ENCODE measurements at regions of chr12 and their contacts with region 1.

Region 1: GRCh38 chr12:25020621-25021243 is 71.8 kb upstream of the BCAT1 start:
- DNase-seq: peak; percentile 96
- H3K4me3 ChIP-seq: peak overlapping the region; percentile 47
- H3K27ac ChIP-seq: peak overlapping the region; percentile 98
- H3K4me1 ChIP-seq: peaks cover 94% of the 10 kb centered on the region
- CTCF ChIP-seq: no peak

Region 2: DNA sequence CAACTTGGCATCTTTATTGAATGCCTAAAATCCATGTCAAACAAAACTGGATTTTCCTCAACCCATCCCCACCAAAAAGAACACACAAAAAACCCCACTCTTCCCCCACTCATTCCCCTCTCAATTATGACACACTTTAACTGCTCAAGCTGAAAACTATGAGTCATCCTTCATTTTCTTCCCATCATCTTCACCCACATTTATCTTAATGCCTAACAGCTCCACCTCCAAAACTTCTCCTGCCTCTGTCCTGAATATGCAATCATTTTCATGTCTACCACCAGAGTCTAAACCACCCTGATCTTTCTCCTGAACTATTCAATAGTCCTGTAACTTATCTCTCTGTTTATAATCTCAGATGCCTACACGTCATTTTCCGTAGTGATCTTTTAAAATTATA is 311.5 kb before region 1 on chr12:
- CTCF ChIA-PET with region 1: no interaction called
- POLR2A ChIA-PET with region 1: no interaction called
- intact Hi-C with region 1: no loop called
- DNase-seq: no peak
- H3K4me3 ChIP-seq: no peak overlapping the region
- H3K27ac ChIP-seq: no peak overlapping the region
- H3K4me1 ChIP-seq: peaks cover 28% of the 10 kb centered on the region
- CTCF ChIP-seq: no peak

Region 3: DNA sequence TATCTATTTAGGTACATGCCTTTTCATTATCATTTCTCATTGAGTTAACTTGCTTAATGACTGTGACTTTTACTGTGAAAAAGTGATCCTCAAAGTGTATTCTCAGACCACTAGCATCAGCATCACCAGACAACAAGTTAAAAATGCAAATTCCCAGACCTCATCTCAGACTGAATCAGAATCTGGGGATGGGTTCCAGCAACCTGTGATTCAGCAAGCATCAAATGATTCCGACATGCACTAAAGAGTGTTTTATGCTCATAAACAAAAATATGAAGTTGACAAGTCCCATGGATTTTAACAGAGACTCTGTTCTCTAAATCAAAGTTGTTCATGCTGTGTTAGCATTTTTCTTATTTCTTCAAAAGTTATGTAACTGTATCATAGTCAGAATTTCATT is 202.4 kb before region 1 on chr12:
- CTCF ChIA-PET with region 1: no interaction called
- POLR2A ChIA-PET with region 1: no interaction called
- intact Hi-C with region 1: no loop called
- DNase-seq: no peak
- H3K4me3 ChIP-seq: no peak overlapping the region
- H3K27ac ChIP-seq: no peak overlapping the region
- H3K4me1 ChIP-seq: peaks cover 22% of the 10 kb centered on the region
- CTCF ChIP-seq: no peak

Region 4: GRCh38 chr12:24948757-24949722 is 71.7 kb before region 1 on chr12 and contains the start of gene BCAT1:
- CTCF ChIA-PET with region 1: no interaction called
- POLR2A ChIA-PET with region 1: interaction called, 13 read pairs
- intact Hi-C with region 1: no loop called
- DNase-seq: peak; percentile 93
- H3K4me3 ChIP-seq: peak within 1 kb of the TSS; percentile 79
- H3K27ac ChIP-seq: peak within 1 kb of the TSS; percentile 70
- H3K4me1 ChIP-seq: peaks cover 59% of the 10 kb centered on the region
- CTCF ChIP-seq: peak; percentile 49; the same call in 1 of the 2 replicates
- total RNA-seq, gene BCAT1: 116 and 121 TPM in 2 replicates

Region 5: GRCh38 chr12:24960222-24960855 is 60.4 kb before region 1 on chr12:
- CTCF ChIA-PET with region 1: no interaction called
- POLR2A ChIA-PET with region 1: no interaction called
- intact Hi-C with region 1: no loop called
- DNase-seq: peak; percentile 72
- H3K4me3 ChIP-seq: no peak overlapping the region
- H3K27ac ChIP-seq: no peak overlapping the region
- H3K4me1 ChIP-seq: no peaks in the 10 kb centered on the region
- CTCF ChIP-seq: peak; percentile 91

Region 6: DNA sequence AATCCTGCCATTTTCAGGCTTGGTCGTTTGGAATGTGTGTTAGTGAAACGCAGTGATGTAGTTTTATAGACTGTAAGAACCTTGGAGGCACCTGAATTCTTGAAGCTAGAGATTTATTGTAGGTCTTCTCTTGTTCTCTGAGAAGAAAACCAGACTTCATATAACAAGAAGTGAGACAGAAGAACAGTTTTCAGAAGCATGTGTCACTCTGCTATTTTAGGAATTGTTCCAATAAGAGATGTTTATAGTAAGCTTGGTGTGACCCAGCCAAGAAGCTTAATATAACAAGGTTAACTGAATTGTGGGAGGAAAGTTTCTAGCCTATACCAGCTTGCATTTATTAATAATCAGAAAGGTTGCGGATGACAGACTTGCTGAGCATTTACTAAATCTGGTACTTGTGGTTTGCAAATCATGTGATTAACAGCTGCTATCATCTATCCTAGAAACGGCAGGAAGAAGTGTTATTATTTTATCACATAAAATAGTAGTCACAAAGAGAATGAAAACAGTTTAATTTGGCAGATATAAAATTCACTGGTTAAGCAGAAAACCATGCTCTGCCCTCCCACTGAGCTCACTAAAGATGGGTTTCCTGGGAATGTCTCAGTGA is 22.7 kb before region 1 on chr12:
- CTCF ChIA-PET with region 1: interaction called, 12 read pairs
- POLR2A ChIA-PET with region 1: interaction called, 854 read pairs
- intact Hi-C with region 1: loop called (anchors 1 kb)
- DNase-seq: peak; percentile 96
- H3K4me3 ChIP-seq: peak overlapping the region; percentile 63
- H3K27ac ChIP-seq: peak overlapping the region; percentile 98
- H3K4me1 ChIP-seq: peaks cover 98% of the 10 kb centered on the region
- CTCF ChIP-seq: no peak

Region 7: DNA sequence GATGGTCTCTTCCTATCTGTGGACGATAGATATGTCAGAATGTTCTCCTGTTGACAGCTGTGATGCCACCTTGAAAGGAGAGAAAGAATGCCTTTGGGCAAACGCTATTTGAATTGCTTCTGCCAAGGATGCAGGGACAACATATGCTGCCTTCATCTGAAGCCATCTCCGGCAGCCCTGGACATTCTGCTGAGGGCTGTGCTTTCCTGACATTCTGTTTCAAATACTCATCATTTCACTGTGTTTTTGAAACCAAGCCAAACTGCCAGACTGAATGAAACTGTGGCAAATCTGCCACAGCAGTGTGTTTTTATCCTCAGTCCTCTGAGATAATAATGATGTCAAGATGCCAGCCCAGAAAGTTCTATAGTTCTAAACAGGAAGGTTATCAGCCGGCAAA is 13.9 kb after region 1 on chr12:
- CTCF ChIA-PET with region 1: no interaction called
- POLR2A ChIA-PET with region 1: interaction called, 61 read pairs
- intact Hi-C with region 1: no loop called
- DNase-seq: no peak
- H3K4me3 ChIP-seq: no peak overlapping the region
- H3K27ac ChIP-seq: no peak overlapping the region
- H3K4me1 ChIP-seq: no peaks in the 10 kb centered on the region
- CTCF ChIP-seq: no peak

Region 8: DNA sequence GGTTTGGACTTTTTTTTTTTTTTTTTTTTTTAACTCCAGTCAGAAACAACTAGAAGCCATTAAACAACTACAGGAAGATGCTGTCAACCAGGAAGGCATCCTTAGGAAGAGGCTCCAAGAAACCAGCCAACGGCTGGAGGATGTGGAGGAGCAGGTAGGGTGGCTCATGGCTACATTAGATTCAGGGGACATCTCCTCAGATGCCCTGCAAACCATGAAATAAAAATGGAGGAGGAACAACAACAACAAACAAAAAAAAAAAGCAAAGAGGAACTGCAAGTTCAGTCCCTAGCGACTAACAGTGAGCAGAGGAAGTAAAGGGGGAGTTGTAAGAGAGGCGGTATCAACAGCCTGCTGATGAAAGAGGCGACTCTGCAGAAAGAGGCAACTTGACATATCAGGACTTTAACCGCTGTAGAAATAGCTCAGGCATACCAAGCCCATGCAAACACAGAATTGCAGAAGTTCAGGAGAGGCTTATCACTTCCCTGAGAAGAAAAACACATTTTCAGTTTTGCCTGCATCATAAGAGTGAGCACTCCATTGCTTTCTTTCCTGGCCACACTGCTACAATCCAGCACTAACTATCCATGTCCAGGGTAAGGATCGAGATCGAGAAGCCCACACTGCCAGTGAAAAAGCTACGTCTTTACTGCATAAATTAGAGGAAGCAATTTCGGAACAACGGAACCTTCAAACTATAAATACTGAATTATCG is 31.6 kb after region 1 on chr12:
- CTCF ChIA-PET with region 1: interaction called, 6 read pairs
- POLR2A ChIA-PET with region 1: interaction called, 524 read pairs
- intact Hi-C with region 1: loop called (anchors 1 kb)
- DNase-seq: peak; percentile 95
- H3K4me3 ChIP-seq: peak overlapping the region; percentile 90
- H3K27ac ChIP-seq: peak overlapping the region; percentile 94
- H3K4me1 ChIP-seq: peaks cover 21% of the 10 kb centered on the region
- CTCF ChIP-seq: no peak; the same call in 1 of the 2 replicates

Region 9: GRCh38 chr12:25295361-25295760 is 274.6 kb after region 1 on chr12:
- CTCF ChIA-PET with region 1: no interaction called
- POLR2A ChIA-PET with region 1: no interaction called
- intact Hi-C with region 1: no loop called
- DNase-seq: no peak
- H3K4me3 ChIP-seq: no peak overlapping the region
- H3K27ac ChIP-seq: no peak overlapping the region
- H3K4me1 ChIP-seq: no peaks in the 10 kb centered on the region
- CTCF ChIP-seq: no peak